Left ventricle myocardium superior (tissue), 1 donor: ENCODE measurements at regions of chr7 and their contacts with region 1.

Region 1: DNA sequence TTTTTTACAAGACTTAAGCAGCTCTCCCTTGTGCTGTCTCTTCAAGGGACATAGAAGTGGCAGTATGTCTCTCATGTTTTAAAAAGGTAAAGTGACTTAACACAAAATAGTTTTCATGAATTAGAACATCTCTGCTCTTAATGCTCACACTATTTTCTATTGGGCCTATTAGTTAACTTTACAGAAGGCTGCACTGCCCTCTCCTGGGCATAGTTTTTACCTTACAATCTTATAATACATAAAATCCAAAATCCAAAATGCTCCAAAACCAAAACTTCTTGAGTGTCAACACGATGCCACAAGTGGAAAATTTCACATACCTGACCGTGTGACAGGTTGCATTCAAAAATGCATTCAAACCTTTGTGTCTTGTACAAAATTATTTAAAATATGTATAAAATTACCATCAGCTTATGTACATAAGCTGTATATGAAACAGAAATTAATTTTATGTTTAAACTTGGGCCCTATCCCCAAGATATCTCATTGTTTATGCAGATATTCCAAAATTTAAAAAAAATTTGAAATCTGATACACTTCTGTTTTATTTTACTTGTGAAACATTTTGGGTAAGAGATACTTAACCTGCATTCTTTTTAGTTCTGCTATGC is 25.8 kb downstream of the TES start:
- DNase-seq: peak; percentile 27
- ATAC-seq: peak; percentile 61

Region 2: DNA sequence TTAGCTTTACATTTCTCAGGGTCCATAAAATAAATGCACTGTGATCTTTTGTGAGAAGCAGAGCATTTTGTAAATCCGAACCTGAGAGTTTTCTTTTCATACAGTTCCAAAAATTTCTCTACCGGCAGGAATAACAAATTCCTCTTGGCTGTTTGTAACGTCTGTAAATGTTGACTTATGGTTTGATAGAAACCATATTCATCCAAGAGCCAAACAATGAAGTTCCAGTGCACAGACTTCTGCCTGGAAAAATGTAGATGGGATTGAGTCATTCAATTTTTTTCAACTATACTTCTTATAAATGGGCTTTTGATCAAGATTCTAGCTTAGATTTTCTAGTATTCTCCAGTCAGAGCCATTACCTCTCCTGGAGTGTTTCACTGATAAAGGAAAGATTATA is 736.2 kb before region 1 on chr7:
- intact Hi-C with region 1: no loop called
- DNase-seq: no peak
- ATAC-seq: no peak

Region 3: GRCh38 chr7:116180302-116180701 is 55.8 kb before region 1 on chr7:
- intact Hi-C with region 1: loop called (anchors 2 kb)
- DNase-seq: no peak
- ATAC-seq: peak; percentile 52